Left cardiac atrium (tissue), 4 donors: ENCODE measurements at regions of chr9 and their contacts with region 1.

Region 1: GRCh38 chr9:114587385-114588202 is at the start of gene ATP6V1G1:
- DNase-seq: peak; percentile 100
- ATAC-seq: peak; percentile 98 to 99
- total RNA-seq, gene ATP6V1G1: 71.5 to 92.9 TPM

Region 2: DNA sequence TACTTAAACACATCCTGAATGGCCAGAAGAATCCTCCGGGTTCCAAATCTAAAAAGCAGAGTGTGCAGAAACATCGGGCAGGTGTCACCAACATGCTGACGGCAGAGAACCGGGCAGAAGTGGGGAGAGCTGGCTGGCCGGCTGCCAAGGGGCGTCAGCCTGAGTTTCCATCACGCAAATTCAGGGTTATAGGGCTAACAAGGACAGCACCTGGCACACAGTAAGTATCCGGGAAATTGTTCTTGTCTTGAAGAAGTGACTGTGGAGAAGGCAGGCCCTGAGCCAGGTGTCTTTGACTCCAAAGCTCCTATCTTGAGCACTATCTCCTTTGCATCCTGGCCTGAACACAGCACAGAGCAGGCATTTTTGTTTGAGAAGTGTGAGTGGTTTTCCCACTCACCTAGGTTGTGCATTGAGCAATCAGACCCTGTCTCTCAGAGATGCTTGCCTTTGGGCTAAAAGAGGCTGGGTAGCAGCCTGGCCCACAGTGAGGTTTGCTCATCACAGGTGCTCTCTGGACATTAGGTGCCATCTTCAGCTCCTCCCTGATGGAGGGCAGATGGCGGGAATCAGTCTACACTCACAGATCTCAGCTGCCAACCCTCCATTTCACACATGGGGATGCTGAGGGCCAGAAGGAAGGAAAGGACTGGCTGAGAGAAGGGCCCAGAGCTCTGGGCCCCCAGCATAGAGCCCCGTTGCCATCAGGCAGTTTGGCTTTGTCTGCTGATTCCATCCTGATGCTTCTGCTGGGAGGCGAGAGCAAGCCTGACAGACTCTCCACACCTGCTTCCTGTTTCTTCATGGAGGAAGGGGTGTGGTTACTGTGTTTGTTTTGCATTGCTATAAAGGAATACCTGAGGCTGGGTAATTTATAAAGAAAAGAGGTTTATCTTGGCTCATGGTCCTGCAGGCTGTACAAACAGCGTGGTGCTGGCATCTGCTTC is 135.1 kb before region 1 on chr9:
- intact Hi-C with region 1: no loop called
- DNase-seq: no peak
- ATAC-seq: no peak

Region 3: GRCh38 chr9:114551883-114552685 is 35.5 kb before region 1 on chr9:
- intact Hi-C with region 1: loop called in 1 of 2 experiments (anchors 2 kb)
- DNase-seq: peak; percentile 79
- ATAC-seq: peak; percentile 86 to 98